Endothelial cell of umbilical vein (primary cell): ENCODE measurements at regions of chr20 and their contacts with region 1.

Region 1: GRCh38 chr20:38229376-38230252 is 30.9 kb downstream of the KIAA1755 start:
- DNase-seq: peak; percentile 46
- H3K4me3 ChIP-seq: no peak overlapping the region
- H3K27ac ChIP-seq: no peak overlapping the region
- H3K4me1 ChIP-seq: peaks cover 10% of the 10 kb centered on the region
- H3K27me3 ChIP-seq: peaks cover 0 to 1% of the 10 kb centered on the region in 2 experiments
- CTCF ChIP-seq: peak; percentile 48 to 56
- POLR2A ChIP-seq: no peak

Region 2: GRCh38 chr20:38290832-38291581 is 61.4 kb after region 1 on chr20:
- CTCF ChIA-PET with region 1: interaction called, 9 read pairs
- POLR2A ChIA-PET with region 1: no interaction called
- dilution Hi-C with region 1: no loop called
- intact Hi-C with region 1: loop called (anchors 1 kb)
- DNase-seq: peak; percentile 33
- H3K4me3 ChIP-seq: no peak overlapping the region
- H3K27ac ChIP-seq: no peak overlapping the region
- H3K4me1 ChIP-seq: no peaks in the 10 kb centered on the region
- H3K27me3 ChIP-seq: no peaks in the 10 kb centered on the region
- CTCF ChIP-seq: peak; percentile 17 to 49
- POLR2A ChIP-seq: no peak

Region 3: DNA sequence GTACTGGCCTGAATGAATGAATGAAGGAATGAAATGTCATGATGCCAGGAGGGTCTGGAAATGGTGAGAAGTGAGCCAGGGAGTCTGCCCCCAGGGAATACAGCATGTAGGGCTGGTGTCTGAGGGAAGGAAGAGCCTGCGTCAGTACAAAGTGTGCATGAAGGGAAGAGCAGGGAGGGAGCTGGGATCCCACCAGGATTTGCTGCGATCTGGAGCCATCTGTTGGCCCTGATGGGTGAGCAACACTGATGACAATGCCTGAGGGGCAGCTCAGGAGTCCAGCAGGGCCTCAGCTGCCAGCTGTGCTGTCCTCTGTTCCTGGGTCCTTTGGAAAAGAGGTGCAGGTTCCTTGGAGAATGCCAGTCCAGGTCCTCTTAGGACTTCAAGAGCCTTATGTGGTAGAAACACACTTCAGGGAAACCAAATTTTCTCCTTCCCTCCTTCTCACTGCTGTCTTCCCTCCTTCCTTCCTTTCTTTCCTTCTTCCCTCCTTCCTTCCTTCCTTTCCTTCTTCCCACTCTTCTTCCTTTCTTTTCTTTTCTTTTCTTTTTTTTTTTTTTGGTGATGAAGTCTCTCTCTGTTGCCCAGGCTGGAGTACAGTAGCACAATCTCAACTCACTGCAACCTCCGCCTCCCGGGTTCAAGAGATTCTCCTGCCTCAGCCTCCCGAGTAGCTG is 85.8 kb after region 1 on chr20:
- CTCF ChIA-PET with region 1: interaction called, 204 read pairs
- POLR2A ChIA-PET with region 1: no interaction called
- dilution Hi-C with region 1: no loop called
- intact Hi-C with region 1: no loop called
- DNase-seq: no peak
- H3K4me3 ChIP-seq: no peak overlapping the region
- H3K27ac ChIP-seq: no peak overlapping the region
- H3K4me1 ChIP-seq: no peaks in the 10 kb centered on the region
- H3K27me3 ChIP-seq: peaks cover 2 to 6% of the 10 kb centered on the region in 2 experiments
- CTCF ChIP-seq: peak in 1 of 2 donors; percentile 7
- POLR2A ChIP-seq: no peak

Region 4: DNA sequence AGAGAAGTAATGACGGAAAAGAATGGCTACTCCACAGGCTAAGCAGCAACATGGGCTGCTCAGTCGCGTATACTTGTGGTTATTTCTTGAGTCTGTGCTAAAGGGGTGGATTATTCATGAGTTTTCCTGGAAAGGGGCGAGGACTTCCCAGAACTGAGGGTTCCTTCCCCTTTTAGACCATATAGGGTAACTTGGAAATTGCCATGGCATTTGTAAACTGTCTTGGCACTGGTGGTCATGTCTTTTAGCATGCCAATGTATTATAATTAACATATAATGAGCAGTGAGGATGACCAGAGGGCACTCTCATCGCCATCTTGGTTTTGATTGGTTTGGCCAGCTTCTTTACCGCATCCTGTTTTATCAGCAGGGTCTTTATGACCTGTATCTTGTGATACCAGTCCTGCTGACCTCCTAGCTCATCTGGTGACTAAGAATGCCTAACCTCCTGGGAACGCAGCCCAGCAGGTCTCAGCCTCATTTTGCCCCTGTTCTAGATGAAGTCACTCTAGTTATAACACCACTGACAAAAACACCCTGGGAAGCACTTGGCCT is 128.1 kb after region 1 on chr20:
- CTCF ChIA-PET with region 1: interaction called, 10 read pairs
- POLR2A ChIA-PET with region 1: no interaction called
- dilution Hi-C with region 1: no loop called
- intact Hi-C with region 1: no loop called
- DNase-seq: no peak
- H3K4me3 ChIP-seq: no peak overlapping the region
- H3K27ac ChIP-seq: no peak overlapping the region
- H3K4me1 ChIP-seq: no peaks in the 10 kb centered on the region
- H3K27me3 ChIP-seq: no peaks in the 10 kb centered on the region
- CTCF ChIP-seq: no peak
- POLR2A ChIP-seq: no peak

Region 5: GRCh38 chr20:38418509-38419204 is 189.0 kb after region 1 on chr20:
- CTCF ChIA-PET with region 1: no interaction called
- POLR2A ChIA-PET with region 1: no interaction called
- dilution Hi-C with region 1: no loop called
- intact Hi-C with region 1: no loop called
- DNase-seq: peak; percentile 77
- H3K4me3 ChIP-seq: no peak overlapping the region
- H3K27ac ChIP-seq: no peak overlapping the region
- H3K4me1 ChIP-seq: no peaks in the 10 kb centered on the region
- H3K27me3 ChIP-seq: no peaks in the 10 kb centered on the region
- CTCF ChIP-seq: no peak
- POLR2A ChIP-seq: no peak